Panc1 (cell line): ENCODE measurements at regions of chrX and their contacts with region 1.

Region 1: DNA sequence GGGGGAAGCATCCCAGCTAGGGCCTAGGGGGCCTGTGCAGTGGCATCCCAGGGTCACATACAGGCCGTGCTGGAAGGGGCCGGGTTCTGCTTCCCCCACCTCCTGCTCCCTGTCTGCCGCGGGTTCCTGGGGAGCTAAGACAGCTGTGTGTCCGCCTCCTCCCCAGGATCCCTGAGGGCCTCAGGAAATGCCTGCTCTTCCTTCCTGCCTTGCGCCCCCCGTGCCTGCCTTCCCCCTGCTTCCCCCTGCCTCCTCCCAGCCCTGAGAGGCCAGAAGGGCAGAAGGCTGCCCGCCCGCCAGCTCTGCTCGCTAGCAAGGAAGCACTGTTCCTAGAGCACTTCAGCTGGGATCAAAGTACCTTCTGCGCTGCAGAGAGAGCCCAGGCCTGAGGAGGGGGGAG is 2.9 kb upstream of the BGN start:
- DNase-seq: no peak
- ATAC-seq: no peak
- H3K4me3 ChIP-seq: no peak overlapping the region
- H3K27ac ChIP-seq: no peak overlapping the region
- H3K4me1 ChIP-seq: peaks cover 37% of the 10 kb centered on the region
- H3K27me3 ChIP-seq: no peaks in the 10 kb centered on the region
- CTCF ChIP-seq: no peak

Region 2: DNA sequence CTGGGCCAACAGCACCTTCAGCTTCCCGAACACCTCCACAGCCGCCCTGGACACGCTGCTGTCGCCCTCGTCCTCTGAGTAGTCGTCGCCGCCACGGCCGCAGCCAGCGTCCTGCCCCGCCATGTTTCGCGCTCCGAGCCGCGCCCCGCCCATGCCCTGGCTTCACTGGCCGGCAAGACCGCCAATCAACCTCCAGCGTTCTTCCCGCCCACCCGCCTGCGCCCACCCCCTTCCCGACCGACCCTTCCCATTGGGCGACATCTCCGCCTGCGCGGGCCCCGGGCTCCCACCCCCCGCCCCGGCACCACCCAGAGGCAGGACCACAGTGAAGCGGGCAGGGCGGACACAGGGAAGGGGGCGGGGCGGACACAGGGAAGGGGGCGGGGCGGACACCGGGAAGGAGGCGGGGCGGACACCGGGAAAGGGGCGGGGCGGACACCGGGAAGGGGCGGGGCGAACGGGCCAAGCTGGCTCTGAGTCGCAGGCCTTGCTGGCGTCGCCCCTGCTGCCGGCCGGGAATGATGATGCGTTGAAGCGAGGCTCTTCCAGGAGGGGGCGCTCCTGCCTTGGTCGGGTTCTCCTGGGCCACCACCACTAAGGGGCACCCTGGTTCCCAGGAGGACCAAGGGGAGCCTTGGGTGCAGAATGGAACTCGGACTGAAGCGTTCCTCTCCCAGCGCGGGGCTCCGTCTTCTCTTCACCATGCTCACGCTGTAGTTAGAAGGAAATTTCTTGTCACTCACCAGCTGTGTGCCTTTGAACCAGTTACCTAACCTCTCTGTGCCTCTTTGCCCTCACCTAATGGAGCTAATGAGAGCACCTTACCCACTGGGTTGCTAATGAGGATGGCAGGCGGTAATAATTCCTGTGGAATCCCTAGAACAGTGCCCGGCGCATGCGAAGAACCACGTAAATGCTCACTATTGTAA is 21.2 kb before region 1 on chrX and contains the start of gene HAUS7:
- CTCF ChIA-PET with region 1: interaction called, 4 read pairs
- POLR2A ChIA-PET with region 1: interaction called, 12 read pairs
- in situ Hi-C with region 1: no loop called
- intact Hi-C with region 1: no loop called
- DNase-seq: peak; percentile 43
- ATAC-seq: peak; percentile 91
- H3K4me3 ChIP-seq: peak within 1 kb of the TSS; percentile 75 to 95
- H3K27ac ChIP-seq: peak within 1 kb of the TSS; percentile 81
- H3K4me1 ChIP-seq: no peaks in the 10 kb centered on the region
- H3K27me3 ChIP-seq: no peaks in the 10 kb centered on the region
- CTCF ChIP-seq: no peak
- total RNA-seq, gene HAUS7: 59.9 TPM